ENCODE measurements at regions of chr1 and their contacts with region 1.

Region 1: DNA sequence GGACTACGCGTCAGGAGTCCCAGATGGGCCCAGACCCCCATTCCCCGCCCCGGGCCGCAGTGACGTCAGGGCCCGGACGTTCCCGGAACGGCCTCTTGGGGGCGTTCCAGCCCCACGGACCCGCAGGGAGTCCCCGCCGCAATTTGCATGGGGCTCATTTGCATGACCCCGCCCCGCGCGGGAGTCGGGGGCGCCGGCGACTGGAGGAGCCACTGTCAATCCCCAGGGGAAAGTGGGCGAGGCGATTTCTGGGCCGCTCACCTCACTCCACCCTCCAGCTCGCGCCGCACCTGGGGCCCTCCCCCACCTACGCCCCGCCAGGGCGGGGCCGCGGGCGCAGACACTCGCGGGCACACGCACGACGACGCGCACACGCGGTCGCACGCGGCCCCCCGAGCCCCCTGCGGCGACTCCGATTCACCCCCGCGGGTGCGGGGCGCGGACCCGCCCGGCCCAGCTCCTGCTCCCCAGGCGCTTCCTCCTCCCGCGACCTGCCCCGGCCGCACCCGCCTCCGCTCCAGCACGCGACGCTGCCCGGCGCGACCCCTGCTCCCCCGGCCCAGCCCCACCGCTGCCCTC is 13.2 kb downstream of the AGRN start:
- DNase-seq: peak; percentile 45 to 73 (median 49)
- H3K4me3 ChIP-seq: peak overlapping the region; percentile 11 to 66 (median 21)
- H3K4me3 Mint-ChIP-seq: peak overlapping the region; percentile 39 to 72
- H3K27ac ChIP-seq: no peak overlapping the region
- H3K27ac Mint-ChIP-seq: no peak overlapping the region
- H3K4me1 ChIP-seq: peaks cover 7 to 19% of the 10 kb centered on the region in 2 donors
- H3K4me1 Mint-ChIP-seq: peaks cover 8% of the 10 kb centered on the region
- H3K27me3 ChIP-seq: peaks cover 8 to 56% of the 10 kb centered on the region in 2 donors
- H3K27me3 Mint-ChIP-seq: peaks cover 31 to 51% (median 46%) of the 10 kb centered on the region in 3 donors
- CTCF ChIP-seq: peak; percentile 90

Region 2: DNA sequence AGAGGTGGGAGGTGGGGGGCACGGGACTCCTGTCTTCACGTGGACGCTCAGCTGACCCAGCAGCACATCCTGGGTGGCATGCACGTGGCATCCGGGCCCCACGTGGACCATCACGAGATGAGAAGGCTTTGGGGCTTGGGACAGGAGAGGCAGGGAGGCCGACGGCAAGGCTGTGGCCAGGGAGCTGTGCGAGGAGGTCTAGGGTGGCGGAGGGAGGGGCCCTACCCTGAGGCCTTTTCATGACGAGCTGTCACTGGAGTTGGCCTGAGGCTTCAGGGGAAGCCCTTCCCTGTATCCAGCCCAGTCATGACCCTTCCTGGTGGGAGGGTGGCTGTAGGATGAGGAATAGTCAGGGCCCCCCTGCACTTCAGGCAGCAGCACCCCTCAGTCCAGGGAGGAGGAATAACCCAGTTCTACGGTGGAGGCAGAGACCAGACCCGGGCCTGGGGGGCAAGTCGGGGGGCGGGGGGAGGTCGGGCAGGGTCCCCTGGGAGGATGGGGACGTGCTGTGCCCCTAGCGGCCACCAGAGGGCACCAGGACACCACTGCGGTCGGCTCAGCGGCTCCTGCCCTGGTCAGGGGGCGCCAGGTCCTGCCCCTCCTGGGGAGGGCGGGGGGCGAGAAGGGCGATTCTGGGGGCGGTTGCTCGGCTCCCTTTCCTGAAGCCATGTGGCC is 49.2 kb before region 1 on chr1:
- intact Hi-C with region 1: no loop called
- DNase-seq: peak in 2 of 3 donors; percentile 29 to 50
- H3K4me3 ChIP-seq: no peak overlapping the region
- H3K4me3 Mint-ChIP-seq: no peak overlapping the region
- H3K27ac ChIP-seq: no peak overlapping the region
- H3K27ac Mint-ChIP-seq: peak overlapping the region in 1 of 7 donors; percentile 24
- H3K4me1 ChIP-seq: no peaks in the 10 kb centered on the region
- H3K4me1 Mint-ChIP-seq: no peaks in the 10 kb centered on the region
- H3K27me3 ChIP-seq: peaks cover 0 to 13% of the 10 kb centered on the region in 2 donors
- H3K27me3 Mint-ChIP-seq: peaks cover 37 to 59% (median 43%) of the 10 kb centered on the region in 3 donors
- CTCF ChIP-seq: peak; percentile 97

Region 3: DNA sequence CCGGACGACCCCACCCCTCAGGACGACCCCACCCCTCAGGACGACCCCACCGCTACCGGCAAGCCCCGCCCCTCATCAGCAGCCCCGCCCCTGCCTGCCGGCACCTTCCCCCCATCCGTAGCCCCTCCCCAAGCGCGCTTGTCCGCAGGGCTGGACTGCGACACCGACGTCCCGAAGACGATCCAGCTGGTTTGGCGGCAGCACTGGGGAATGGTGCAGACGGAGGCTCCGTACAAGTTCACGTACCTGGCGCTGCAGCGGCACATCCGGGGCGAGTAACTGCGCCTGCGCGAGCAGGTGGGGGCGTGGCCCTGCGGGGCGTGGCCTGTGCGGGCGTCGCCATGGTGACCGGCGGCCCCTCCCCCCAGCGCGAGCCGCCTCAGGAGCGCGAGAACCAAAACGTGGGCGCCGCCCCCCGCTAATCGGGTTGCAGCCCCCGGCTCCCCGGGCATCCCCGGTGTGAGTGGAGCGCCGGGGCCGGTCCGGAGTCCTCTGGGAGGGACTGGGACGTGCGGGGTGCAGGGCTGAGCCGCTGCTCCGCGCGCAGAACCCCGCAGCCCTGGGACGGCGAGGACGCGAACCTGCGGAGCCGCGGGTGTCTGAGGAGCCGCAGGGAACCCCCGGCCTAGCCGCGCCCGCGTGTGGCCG is 36.1 kb after region 1 on chr1:
- intact Hi-C with region 1: loop called in 1 of 2 experiments (anchors 5 kb)
- DNase-seq: peak; percentile 61 to 74 (median 63)
- H3K4me3 ChIP-seq: peak overlapping the region; percentile 32 to 85 (median 53)
- H3K4me3 Mint-ChIP-seq: peak overlapping the region; percentile 70 to 79
- H3K27ac ChIP-seq: peak overlapping the region in 1 of 2 donors; percentile 76
- H3K27ac Mint-ChIP-seq: peak overlapping the region in 1 of 7 donors; percentile 79
- H3K4me1 ChIP-seq: peaks cover 8 to 19% of the 10 kb centered on the region in 2 donors
- H3K4me1 Mint-ChIP-seq: peaks cover 7% of the 10 kb centered on the region
- H3K27me3 ChIP-seq: peaks cover 0 to 24% of the 10 kb centered on the region in 2 donors
- H3K27me3 Mint-ChIP-seq: peaks cover 21 to 56% (median 32%) of the 10 kb centered on the region in 3 donors
- CTCF ChIP-seq: no peak

Region 4: DNA sequence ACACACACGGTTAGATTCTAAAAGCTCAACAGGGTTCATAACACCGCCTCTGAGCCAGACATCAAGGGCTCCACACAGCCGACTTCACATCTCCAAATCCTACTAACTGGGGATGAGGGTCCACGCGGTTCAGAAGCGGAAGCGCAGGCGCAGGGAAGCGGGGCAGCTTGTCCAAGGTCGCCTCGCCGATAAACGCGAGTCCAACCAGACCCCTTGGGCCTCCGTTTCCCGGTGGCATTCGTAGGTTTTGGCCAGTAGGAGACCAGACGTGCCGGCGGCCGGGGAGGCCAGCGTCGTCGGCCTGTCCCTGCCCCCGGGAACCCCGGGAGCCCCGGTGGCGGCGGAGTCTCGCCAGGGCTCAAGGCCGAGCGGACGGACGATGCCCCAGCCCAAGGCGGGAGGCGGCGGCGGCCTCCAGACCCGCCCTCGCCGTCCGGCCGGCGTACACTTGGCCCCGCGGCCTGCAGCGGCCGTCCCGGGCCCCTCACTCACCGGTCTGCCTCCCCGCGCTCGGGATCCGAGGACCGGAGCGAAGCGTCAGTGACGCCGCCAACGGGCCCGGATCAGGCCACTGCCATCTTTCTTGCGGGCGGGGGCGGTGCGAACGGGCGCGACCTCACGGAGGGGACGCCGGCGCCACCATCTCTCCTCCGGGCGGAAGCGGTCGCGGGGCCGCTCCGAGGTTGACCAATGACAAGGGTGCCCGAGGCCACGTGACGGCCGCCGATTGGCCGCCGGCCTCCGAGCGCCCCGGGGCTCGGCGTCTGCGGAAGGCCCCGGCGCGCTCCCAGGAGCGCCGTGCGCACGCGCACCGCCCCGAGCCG is 198.5 kb after region 1 on chr1 and contains the start of gene SDF4:
- intact Hi-C with region 1: loop called in 1 of 2 experiments (anchors 10 kb)
- DNase-seq: peak; percentile 94 to 98 (median 96)
- H3K4me3 ChIP-seq: peak within 1 kb of the TSS; percentile 86 to 88 (median 87)
- H3K4me3 Mint-ChIP-seq: peak within 1 kb of the TSS; percentile 91 to 96
- H3K27ac ChIP-seq: peak within 1 kb of the TSS; percentile 52 to 90
- H3K27ac Mint-ChIP-seq: peak within 1 kb of the TSS; percentile 81 to 96 (median 86)
- H3K4me1 ChIP-seq: peaks cover 19 to 31% of the 10 kb centered on the region in 2 donors
- H3K4me1 Mint-ChIP-seq: peaks cover 33% of the 10 kb centered on the region
- H3K27me3 ChIP-seq: no peaks in the 10 kb centered on the region
- H3K27me3 Mint-ChIP-seq: peaks cover 0 to 3% (median 0%) of the 10 kb centered on the region in 3 donors
- CTCF ChIP-seq: no peak
- polyA plus RNA-seq, gene SDF4: 81.7 to 98.9 (median 89.0) TPM

Measured in CD14-positive monocyte (primary cell).